Caco-2 (cell line): ENCODE measurements at regions of chr6 and their contacts with region 1.

Region 1: DNA sequence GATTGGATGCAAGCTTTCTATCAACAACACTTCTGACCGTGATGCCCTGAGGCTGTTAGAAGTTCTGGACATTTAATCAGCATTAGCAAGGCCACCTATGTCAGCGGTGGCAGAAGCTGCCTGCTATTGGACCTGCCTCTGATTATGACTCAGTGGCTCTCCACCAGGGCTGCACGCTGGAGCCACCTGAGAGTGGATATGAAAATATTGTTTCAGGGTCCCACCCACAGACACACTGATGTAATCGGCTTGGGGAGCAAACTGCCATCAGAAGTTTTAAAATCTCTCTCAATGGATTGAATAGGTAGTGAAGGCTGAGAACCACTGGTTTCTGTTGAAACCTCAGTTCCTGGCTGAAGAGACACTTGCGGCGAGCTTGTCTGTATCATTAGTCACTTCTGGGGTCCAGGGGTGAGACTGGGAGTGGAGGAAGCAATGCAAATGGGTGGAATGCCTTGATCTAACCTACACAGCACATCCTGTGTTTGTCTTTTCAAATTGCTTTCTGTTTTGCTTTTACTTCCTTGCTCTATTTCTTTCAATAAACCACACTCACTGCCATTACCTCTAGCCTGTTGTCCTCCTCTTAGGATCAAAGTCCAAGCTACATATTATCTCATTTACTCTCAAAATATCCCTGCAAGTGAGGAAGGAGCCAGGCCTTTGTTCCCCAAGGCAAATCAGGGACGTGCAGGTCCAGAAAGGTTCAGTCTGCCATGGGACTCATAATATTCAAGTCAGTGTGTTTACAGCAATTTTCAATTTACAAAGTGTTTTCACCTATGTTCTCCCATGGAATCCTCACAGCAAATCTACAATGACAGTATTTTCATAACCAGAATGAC is 4.2 kb downstream of the CLIC5 start:
- DNase-seq: peak; percentile 39 to 74
- H3K4me3 ChIP-seq: no peak overlapping the region
- H3K4me3 Mint-ChIP-seq: peak overlapping the region; percentile 51
- H3K27ac Mint-ChIP-seq: peak overlapping the region; percentile 67
- H3K4me1 ChIP-seq: peaks cover 32% of the 10 kb centered on the region
- H3K4me1 Mint-ChIP-seq: peaks cover 6% of the 10 kb centered on the region
- H3K27me3 ChIP-seq: no peaks in the 10 kb centered on the region
- H3K27me3 Mint-ChIP-seq: no peaks in the 10 kb centered on the region
- CTCF ChIP-seq: no peak

Region 2: DNA sequence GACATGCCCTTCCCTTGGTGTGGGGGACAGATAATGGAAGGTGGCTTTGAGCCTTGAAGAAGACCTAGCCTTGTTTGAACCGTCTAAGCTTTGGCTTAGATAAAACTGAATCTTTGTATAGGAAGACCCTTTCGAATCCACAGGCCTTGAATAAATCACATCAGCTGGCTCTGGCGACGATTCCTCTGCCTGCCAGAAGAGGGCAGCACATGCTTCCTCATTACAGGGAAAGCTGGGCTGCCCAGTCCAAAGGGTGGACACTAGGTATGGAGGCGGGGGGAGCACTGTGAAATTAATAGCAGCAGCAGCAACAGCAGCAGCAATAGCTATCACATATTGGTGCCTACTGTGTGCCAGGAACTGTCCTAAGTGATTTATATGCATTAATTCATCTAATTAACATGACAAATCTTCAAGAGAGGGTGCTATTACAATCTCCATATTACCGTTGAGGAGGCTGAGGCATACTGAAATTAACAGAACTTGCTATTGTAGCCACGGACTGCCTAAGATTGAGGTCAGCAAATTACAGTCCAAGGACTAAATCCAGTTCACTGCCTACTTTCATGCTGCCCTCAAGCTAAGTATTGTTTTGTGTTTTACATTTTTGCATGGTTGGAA is 80.9 kb before region 1 on chr6:
- CTCF ChIA-PET with region 1: no interaction called
- POLR2A ChIA-PET with region 1: no interaction called
- intact Hi-C with region 1: loop called (anchors 1 kb)
- DNase-seq: peak; percentile 69 to 75
- H3K4me3 ChIP-seq: no peak overlapping the region
- H3K4me3 Mint-ChIP-seq: no peak overlapping the region
- H3K27ac Mint-ChIP-seq: no peak overlapping the region
- H3K4me1 ChIP-seq: 0 out of 2 replicates have a peak, but pooled peaks cover 4% of the 10 kb centered on the region
- H3K4me1 Mint-ChIP-seq: no peaks in the 10 kb centered on the region
- H3K27me3 ChIP-seq: no peaks in the 10 kb centered on the region
- H3K27me3 Mint-ChIP-seq: no peaks in the 10 kb centered on the region
- CTCF ChIP-seq: peak; percentile 92 to 93

Region 3: DNA sequence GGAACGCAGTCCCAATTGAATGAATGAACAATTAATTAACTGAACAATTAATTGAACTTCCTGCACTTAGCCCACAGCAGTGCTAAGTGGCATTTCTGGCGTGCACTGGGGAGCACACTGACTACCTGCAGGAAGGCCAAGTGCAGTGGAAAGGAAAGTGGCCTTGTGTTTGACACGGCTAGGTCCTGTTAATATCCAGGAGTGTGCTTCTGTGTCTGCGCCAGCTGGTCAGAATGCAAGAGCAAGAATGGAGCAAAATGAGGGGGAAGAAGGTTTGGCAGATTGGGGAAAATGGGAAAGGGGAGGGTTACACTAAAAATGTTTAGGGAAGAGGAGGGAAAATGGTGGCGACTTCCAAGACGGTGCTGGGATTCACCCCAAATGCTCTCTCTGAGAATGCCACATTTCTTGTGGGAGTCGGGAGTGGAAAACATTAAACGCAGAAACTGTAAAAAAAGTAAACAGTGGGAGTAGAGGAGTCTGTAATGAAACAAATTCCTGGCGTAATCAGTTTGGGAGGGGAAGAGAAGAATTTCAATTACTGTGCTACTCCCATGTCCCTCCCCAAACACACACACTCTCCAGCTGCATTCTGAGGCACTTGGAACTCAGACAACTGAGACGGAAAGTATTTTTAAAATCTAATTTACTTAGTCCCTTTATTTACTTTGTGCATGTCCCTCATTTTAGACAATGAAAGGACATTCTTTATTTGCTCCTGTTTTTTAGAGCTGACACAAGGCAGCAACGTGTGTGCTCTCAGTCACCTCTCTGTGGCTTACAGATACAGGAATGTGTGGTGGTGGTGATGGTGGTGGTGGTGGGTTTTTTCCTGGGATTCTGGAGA is 59.9 kb before region 1 on chr6:
- CTCF ChIA-PET with region 1: no interaction called
- POLR2A ChIA-PET with region 1: interaction called, 4 read pairs
- intact Hi-C with region 1: loop called (anchors 2 kb)
- DNase-seq: peak; percentile 47 to 48
- H3K4me3 ChIP-seq: no peak overlapping the region
- H3K4me3 Mint-ChIP-seq: peak overlapping the region; percentile 61
- H3K27ac Mint-ChIP-seq: peak overlapping the region; percentile 84
- H3K4me1 ChIP-seq: peaks cover 32% of the 10 kb centered on the region
- H3K4me1 Mint-ChIP-seq: peaks cover 33% of the 10 kb centered on the region
- H3K27me3 ChIP-seq: no peaks in the 10 kb centered on the region
- H3K27me3 Mint-ChIP-seq: no peaks in the 10 kb centered on the region
- CTCF ChIP-seq: no peak

Region 4: DNA sequence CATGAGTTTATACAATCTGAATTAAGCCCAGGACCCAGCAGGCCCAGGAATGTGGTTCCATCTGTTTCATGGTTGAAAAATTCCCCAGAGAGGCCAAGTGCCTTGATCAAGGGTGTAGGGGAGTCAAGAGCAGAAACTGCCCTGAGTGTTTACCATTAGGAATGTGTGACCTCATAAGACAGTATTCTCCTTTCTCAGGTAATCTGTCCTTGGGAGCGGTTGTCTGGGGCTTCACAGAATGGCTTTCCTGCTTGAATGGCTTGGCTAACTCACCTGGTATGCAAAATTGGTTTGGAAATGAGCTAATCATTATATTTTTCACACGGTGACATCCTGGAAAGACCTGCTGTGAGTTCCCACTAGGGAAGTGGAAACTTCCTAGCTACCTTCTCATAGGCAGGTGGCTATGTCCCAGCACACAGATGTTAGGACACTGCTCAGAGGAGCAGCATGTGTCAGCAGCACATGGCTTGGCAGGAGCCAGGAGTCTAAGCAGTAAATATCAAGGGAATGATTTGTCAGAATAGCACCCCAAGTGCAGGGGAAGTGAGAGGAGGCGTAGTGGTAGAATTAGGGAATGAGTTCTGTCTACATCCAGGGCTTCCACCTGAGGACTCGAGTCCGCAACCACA is 13.5 kb before region 1 on chr6:
- CTCF ChIA-PET with region 1: no interaction called
- POLR2A ChIA-PET with region 1: no interaction called
- intact Hi-C with region 1: loop called (anchors 1 kb)
- DNase-seq: peak in 1 of 2 experiments; percentile 52
- H3K4me3 ChIP-seq: no peak overlapping the region
- H3K4me3 Mint-ChIP-seq: no peak overlapping the region
- H3K27ac Mint-ChIP-seq: peak overlapping the region; percentile 53
- H3K4me1 ChIP-seq: peaks cover 41% of the 10 kb centered on the region
- H3K4me1 Mint-ChIP-seq: peaks cover 7% of the 10 kb centered on the region
- H3K27me3 ChIP-seq: no peaks in the 10 kb centered on the region
- H3K27me3 Mint-ChIP-seq: no peaks in the 10 kb centered on the region
- CTCF ChIP-seq: no peak

Region 5: DNA sequence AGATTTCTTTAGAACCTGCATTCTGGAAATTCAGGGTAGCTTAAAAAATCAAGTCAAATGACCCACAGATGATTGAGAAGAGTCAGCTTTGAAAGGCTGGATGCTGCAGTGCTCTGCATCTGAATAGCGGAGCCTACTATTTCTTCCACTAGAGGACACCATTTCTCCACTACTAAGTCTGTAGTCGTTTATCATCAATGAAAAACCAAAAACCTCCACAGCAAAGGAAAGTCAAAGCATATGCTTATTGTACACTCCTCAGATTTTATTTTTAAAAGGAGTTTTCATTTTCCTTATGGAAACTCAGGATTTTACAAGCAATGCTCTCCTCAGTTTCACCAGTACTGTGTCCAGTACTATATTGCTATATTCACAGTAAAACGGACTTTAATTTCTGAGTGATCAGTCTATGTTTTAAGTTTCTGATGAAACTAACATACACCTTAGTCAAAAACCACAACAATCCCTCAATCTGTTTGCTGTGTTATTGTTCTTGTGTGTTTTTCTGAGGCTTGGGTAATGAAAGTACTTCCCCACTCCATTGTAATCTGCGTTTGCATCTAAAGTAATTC is 209.8 kb after region 1 on chr6:
- CTCF ChIA-PET with region 1: no interaction called
- POLR2A ChIA-PET with region 1: no interaction called
- intact Hi-C with region 1: no loop called
- DNase-seq: peak in 1 of 2 experiments; percentile 25
- H3K4me3 ChIP-seq: no peak overlapping the region
- H3K4me3 Mint-ChIP-seq: no peak overlapping the region
- H3K27ac Mint-ChIP-seq: no peak overlapping the region
- H3K4me1 ChIP-seq: no peaks in the 10 kb centered on the region
- H3K4me1 Mint-ChIP-seq: no peaks in the 10 kb centered on the region
- H3K27me3 ChIP-seq: no peaks in the 10 kb centered on the region
- H3K27me3 Mint-ChIP-seq: peaks cover 10% of the 10 kb centered on the region
- CTCF ChIP-seq: peak; percentile 61 to 82

Region 6: GRCh38 chr6:46390153-46390876 is 378.9 kb after region 1 on chr6:
- CTCF ChIA-PET with region 1: no interaction called
- POLR2A ChIA-PET with region 1: no interaction called
- intact Hi-C with region 1: no loop called
- DNase-seq: no peak
- H3K4me3 ChIP-seq: no peak overlapping the region
- H3K4me3 Mint-ChIP-seq: no peak overlapping the region
- H3K27ac Mint-ChIP-seq: no peak overlapping the region
- H3K4me1 ChIP-seq: no peaks in the 10 kb centered on the region
- H3K4me1 Mint-ChIP-seq: no peaks in the 10 kb centered on the region
- H3K27me3 ChIP-seq: no peaks in the 10 kb centered on the region
- H3K27me3 Mint-ChIP-seq: peaks cover 6% of the 10 kb centered on the region
- CTCF ChIP-seq: no peak

Region 7: GRCh38 chr6:46652603-46653438 is 641.4 kb after region 1 on chr6 and contains the starts of genes CYP39A1 and SLC25A27:
- CTCF ChIA-PET with region 1: no interaction called
- POLR2A ChIA-PET with region 1: no interaction called
- intact Hi-C with region 1: no loop called
- DNase-seq: peak; percentile 87 to 90
- H3K4me3 ChIP-seq: peak within 1 kb of the TSS; percentile 78
- H3K4me3 Mint-ChIP-seq: peak within 1 kb of the TSS; percentile 88
- H3K27ac Mint-ChIP-seq: peak within 1 kb of the TSS; percentile 64
- H3K4me1 ChIP-seq: peaks cover 7% of the 10 kb centered on the region; the same call in 1 of the 2 replicates
- H3K4me1 Mint-ChIP-seq: peaks cover 5% of the 10 kb centered on the region
- H3K27me3 ChIP-seq: no peaks in the 10 kb centered on the region
- H3K27me3 Mint-ChIP-seq: peaks cover 17% of the 10 kb centered on the region
- CTCF ChIP-seq: no peak
- total RNA-seq, gene CYP39A1: not detected in 2 replicates
- total RNA-seq, gene SLC25A27: 0.64 TPM in 1 of 2 replicates, not detected in the other